GM13976 (cell line): ENCODE measurements at regions of chr1 and their contacts with region 1.

Region 1: GRCh38 chr1:180515864-180516388 is 13.5 kb upstream of the ACBD6 start:
- DNase-seq: peak; percentile 74
- CTCF ChIP-seq: peak; percentile 75

Region 2: GRCh38 chr1:180745098-180745497 is 229.2 kb after region 1 on chr1:
- in situ Hi-C with region 1: no loop called
- DNase-seq: no peak
- CTCF ChIP-seq: no peak

Region 3: DNA sequence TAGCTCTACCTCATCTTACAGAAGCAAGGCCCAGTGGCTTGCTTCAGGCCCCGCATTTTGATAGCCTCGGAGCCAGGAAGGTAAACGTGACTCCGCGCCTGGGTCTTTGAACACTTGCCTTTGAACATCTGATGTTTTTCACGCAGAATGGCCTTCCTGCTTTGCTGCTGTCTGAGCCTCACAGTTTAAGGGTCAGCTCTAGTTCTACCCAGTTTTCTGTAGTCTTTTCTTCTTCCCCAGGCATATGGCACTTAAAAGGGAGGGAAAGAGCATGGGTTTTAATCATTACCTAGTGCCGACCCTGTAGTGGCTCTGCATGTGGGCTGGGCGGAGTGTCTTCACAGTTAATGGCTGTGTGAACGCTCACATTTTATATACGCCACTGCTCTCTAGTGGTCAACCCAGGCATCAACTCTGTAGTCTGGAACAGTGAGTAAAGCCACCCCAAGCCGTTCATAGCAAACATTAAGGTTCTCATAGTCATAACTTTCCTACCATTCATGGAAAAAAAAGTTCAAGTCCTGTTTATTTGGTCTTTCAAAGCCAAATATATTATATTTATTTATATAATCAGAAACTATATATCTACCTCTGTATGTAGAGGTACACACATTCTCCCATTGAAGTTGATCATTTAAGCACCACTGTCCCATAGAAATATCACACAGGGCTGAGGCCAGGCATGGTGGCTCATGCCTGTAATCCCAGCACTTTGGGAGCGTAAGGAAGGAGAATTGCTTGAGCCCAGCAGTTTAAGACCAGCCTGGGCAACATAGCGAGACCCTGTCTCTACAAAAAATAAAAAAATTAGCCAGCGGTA is 650.7 kb after region 1 on chr1:
- in situ Hi-C with region 1: loop called (anchors 10 kb)
- DNase-seq: peak; percentile 76
- CTCF ChIP-seq: peak; percentile 76

Region 4: GRCh38 chr1:181459067-181459466 is 943.1 kb after region 1 on chr1:
- in situ Hi-C with region 1: no loop called
- DNase-seq: no peak
- CTCF ChIP-seq: no peak